T-cell (primary cell): ENCODE measurements at regions of chr16 and their contacts with region 1.

Region 1: DNA sequence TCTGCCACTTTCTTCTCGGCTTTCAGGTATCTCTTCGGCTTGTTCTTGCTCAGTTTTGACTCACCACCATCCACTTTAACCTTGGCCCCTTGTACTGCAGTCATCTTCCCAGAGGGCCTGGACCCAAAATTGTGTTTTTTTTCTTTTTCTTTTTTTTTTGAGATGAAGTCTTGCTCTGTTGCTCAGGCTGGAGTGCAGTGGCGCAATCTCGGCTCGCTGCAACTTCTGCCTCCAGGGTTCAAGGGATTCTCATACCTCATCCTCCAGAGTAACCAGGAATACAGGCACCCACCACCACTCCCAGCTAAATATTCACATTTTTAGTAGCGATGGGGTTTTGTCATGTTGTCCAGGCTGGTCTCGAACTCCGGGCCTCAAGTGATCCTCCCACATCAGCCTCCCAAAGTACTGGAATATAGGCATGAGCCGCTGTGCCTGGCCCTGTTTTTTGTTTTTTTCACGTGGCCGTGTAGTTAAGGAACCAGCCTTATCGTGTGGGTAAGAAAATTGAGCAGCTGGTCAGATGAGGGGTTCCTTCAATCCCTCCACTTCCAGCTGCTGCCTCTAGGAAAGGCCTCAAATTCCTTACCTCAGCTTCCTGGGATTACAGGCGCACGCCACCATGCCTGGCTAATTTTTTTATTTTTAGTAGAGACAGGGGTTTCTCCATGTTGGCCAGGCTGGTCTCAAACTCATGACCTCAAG is 5.8 kb upstream of the DPEP2 start:
- DNase-seq: no peak
- ATAC-seq: no peak
- H3K4me3 ChIP-seq: no peak overlapping the region
- H3K4me3 Mint-ChIP-seq: peak overlapping the region in 2 of 3 donors; percentile 5 to 57
- H3K27ac ChIP-seq: peak overlapping the region; percentile 75
- H3K27ac Mint-ChIP-seq: peak overlapping the region; percentile 96 to 100
- H3K4me1 ChIP-seq: peaks cover 24 to 63% of the 10 kb centered on the region in 2 experiments
- H3K4me1 Mint-ChIP-seq: peaks cover 46 to 57% (median 48%) of the 10 kb centered on the region in 3 donors
- H3K27me3 ChIP-seq: no peaks in the 10 kb centered on the region
- H3K27me3 Mint-ChIP-seq: no peaks in the 10 kb centered on the region

Region 2: DNA sequence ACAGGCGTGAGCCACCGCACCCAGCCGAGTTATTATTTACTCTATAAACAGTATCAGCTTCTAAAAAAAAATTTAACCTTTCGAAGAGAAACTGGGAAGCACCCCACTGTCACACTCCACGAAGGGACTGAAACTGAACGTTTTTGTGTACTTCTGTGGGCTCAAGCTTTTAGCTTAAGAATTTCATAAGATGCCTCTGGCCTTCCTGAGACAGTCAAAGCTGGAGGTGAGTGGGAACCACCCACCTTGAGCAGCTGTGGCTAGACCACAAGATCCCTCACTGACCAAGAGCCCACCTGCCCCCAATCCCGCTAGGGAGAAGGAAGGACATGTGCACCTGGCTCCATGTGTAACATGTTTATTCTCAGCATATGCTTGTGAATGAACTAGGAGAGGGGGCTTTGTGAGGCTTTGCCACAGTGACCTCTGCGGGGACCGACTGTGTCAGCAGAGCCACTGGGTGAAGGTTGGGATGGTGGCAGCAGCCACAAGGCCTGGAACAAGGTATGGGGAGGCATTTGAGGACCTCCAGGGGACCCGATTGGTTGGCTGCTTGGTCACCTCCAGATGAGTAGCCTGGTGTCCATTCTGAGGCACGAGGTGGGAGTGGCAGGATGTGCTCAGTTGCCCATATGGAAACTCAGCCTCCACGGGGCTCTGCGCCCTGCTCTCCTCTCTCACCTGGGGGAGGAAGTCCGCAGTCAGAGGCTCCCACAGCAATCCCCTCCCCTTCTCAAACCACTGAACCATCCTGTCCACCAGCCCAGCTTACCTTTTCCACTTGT is 29.5 kb before region 1 on chr16:
- CTCF ChIA-PET with region 1: no interaction called
- POLR2A ChIA-PET with region 1: no interaction called
- DNase-seq: no peak
- ATAC-seq: no peak
- H3K4me3 ChIP-seq: no peak overlapping the region
- H3K4me3 Mint-ChIP-seq: no peak overlapping the region
- H3K27ac ChIP-seq: no peak overlapping the region
- H3K27ac Mint-ChIP-seq: no peak overlapping the region
- H3K4me1 ChIP-seq: no peaks in the 10 kb centered on the region
- H3K4me1 Mint-ChIP-seq: no peaks in the 10 kb centered on the region
- H3K27me3 ChIP-seq: peaks cover 0 to 17% of the 10 kb centered on the region in 2 experiments
- H3K27me3 Mint-ChIP-seq: peaks cover 0 to under 1% of the 10 kb centered on the region in 2 donors

Region 3: GRCh38 chr16:67987460-67988160 is 17.4 kb before region 1 on chr16:
- CTCF ChIA-PET with region 1: interaction called, 4 read pairs
- POLR2A ChIA-PET with region 1: interaction called in 1 of 2 experiments, 14 read pairs
- DNase-seq: no peak
- ATAC-seq: no peak
- H3K4me3 ChIP-seq: no peak overlapping the region
- H3K4me3 Mint-ChIP-seq: no peak overlapping the region
- H3K27ac ChIP-seq: no peak overlapping the region
- H3K27ac Mint-ChIP-seq: peak overlapping the region; percentile 80 to 82
- H3K4me1 ChIP-seq: peaks cover 8 to 32% of the 10 kb centered on the region in 2 experiments
- H3K4me1 Mint-ChIP-seq: peaks cover 23 to 42% (median 29%) of the 10 kb centered on the region in 3 donors
- H3K27me3 ChIP-seq: no peaks in the 10 kb centered on the region
- H3K27me3 Mint-ChIP-seq: no peaks in the 10 kb centered on the region

Region 4: DNA sequence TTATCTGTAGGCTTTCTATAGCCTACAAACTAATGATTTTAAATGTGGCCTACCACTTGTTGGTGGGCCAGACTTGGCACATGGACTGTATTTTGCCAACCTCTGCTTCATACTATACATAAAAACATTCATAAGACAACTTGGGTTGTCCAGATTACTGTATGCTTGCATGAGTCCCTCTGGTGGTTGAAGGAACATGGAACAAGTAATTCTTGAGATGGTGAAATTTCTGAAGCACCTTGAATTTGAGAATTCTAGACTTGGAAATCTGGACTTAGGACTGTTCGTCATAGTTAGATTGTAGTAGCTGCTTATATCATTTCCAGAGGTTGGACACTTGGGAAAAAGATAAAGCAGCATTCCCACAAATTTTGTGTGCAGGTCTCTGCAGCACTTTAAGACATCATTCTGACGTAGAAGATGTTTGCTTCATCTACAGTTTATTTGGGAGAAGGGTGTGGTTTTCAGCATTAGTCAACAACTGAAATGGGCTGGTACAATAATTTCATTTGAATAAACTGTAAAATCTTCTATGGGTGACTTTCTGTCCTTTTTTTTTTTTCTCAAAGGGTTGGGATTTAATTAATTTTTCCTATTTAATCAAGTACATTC is 111.3 kb after region 1 on chr16:
- CTCF ChIA-PET with region 1: no interaction called
- POLR2A ChIA-PET with region 1: interaction called in 1 of 2 experiments, 10 read pairs
- DNase-seq: peak in 5 of 35 experiments; percentile 14 to 68 (median 21)
- ATAC-seq: peak; percentile 38 to 68 (median 53)
- H3K4me3 ChIP-seq: no peak overlapping the region
- H3K4me3 Mint-ChIP-seq: peak overlapping the region in 1 of 3 donors; percentile 8
- H3K27ac ChIP-seq: no peak overlapping the region
- H3K27ac Mint-ChIP-seq: peak overlapping the region; percentile 32 to 72
- H3K4me1 ChIP-seq: peaks cover 42% of the 10 kb centered on the region in 2 experiments
- H3K4me1 Mint-ChIP-seq: peaks cover 86 to 94% (median 91%) of the 10 kb centered on the region in 3 donors
- H3K27me3 ChIP-seq: no peaks in the 10 kb centered on the region
- H3K27me3 Mint-ChIP-seq: no peaks in the 10 kb centered on the region